Activated CD4-positive, alpha-beta T cell treated with anti-CD3 and anti-CD28 coated beads for 36 hours (primary cell): ENCODE measurements at regions of chr11 and their contacts with region 1.

Region 1: GRCh38 chr11:67353317-67354074 is at the start of gene POLD4:
- DNase-seq: peak; percentile 98
- ATAC-seq: peak; percentile 91
- H3K4me3 Mint-ChIP-seq: peak within 1 kb of the TSS; percentile 95
- H3K27ac Mint-ChIP-seq: peak within 1 kb of the TSS; percentile 99
- H3K4me1 Mint-ChIP-seq: peaks cover 49% of the 10 kb centered on the region
- H3K27me3 Mint-ChIP-seq: no peaks in the 10 kb centered on the region
- total RNA-seq, gene POLD4: 31.3 to 37.5 TPM

Region 2: GRCh38 chr11:67118801-67119584 is 234.5 kb before region 1 on chr11 and contains the start of gene KDM2A:
- CTCF ChIA-PET with region 1: no interaction called
- POLR2A ChIA-PET with region 1: no interaction called
- intact Hi-C with region 1: loop called in 1 of 2 experiments (anchors 1 kb)
- DNase-seq: peak; percentile 100
- ATAC-seq: peak; percentile 85
- H3K4me3 Mint-ChIP-seq: peak within 1 kb of the TSS; percentile 98
- H3K27ac Mint-ChIP-seq: peak within 1 kb of the TSS; percentile 83
- H3K4me1 Mint-ChIP-seq: peaks cover 28% of the 10 kb centered on the region
- H3K27me3 Mint-ChIP-seq: no peaks in the 10 kb centered on the region
- total RNA-seq, gene KDM2A: 74.8 to 89.7 TPM

Region 3: DNA sequence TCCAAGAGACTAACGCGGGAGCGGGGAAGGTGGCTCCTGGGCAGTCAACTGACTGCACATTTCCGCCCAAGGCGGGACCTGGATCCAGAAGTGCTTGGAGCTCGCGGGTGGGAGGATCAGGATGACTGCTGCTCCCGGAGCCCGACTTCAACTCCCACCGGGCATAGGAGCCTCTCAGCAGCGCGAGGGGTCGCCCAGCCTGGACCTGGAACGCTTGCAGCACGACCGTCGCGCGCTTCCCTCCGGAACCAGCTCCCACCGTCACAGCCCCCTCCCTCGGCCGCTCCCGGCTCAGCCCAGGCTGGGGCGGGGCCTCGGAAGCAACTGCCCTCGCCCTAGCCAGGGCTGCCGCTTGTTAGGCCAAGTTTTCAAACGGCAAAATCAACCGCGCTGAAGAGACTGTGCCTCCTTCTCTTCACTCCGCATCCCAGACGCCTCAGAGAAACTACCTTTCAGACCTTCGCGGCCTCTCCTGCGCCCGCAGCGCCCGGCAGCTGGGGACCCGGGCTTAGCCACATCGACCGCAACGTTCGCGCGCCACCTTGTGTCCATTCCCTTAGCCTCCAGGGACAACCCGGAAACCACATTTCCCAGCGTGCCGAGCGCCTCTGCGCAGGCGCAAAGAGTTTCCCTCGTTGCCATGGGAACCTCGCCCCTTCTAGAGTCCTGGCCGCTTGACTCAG is 36.1 kb before region 1 on chr11:
- CTCF ChIA-PET with region 1: interaction called, 39 read pairs
- POLR2A ChIA-PET with region 1: no interaction called
- intact Hi-C with region 1: loop called in 1 of 2 experiments (anchors 2 kb)
- DNase-seq: peak; percentile 99
- ATAC-seq: peak; percentile 83
- H3K4me3 Mint-ChIP-seq: peak overlapping the region; percentile 84
- H3K27ac Mint-ChIP-seq: peak overlapping the region; percentile 95
- H3K4me1 Mint-ChIP-seq: peaks cover 28% of the 10 kb centered on the region
- H3K27me3 Mint-ChIP-seq: peaks cover 3% of the 10 kb centered on the region

Region 4: DNA sequence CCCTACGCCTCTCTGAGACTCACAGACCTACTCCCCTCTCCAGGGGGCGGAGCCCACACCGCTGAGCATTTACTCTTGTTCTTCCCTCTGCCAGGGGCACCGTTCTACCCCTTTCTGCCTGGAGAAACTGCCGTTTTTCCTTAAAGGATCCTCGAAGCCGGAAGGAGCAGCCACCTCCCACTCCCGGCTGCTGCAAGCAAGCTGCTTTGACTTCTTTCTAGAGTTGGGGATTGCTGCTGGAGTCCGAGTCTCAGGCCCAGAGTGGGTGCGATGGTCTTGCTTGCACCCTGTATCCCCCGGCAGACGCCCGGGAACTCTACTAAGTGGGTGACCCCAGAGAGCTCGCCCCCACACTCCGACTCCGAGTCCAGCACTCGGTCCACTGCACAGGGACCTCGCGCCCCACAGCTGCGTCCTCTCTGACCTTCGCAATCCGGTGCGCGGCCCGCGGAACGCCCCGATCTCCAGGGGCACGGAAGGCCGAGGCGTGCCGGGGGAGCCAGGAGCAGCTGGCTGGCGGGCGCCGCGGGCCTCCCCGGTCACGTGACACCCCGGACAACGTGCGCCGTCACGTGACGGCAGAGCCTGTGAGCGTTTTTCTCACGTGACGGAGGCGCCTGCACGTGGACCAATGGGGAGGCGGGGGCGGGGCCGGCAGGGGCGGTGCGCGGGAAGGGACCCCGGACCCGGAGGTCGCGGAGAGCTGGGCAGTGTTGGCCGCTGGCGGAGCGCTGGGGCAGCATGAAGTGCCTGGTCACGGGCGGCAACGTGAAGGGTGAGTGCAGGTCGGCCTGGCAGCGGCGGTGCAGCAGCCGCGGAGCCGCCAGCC is 38.0 kb after region 1 on chr11 and contains the start of gene RAD9A:
- CTCF ChIA-PET with region 1: interaction called, 445 read pairs
- POLR2A ChIA-PET with region 1: interaction called, 3 read pairs
- intact Hi-C with region 1: loop called in 1 of 2 experiments (anchors 1 kb)
- DNase-seq: peak; percentile 97
- ATAC-seq: peak; percentile 74
- H3K4me3 Mint-ChIP-seq: peak within 1 kb of the TSS; percentile 89
- H3K27ac Mint-ChIP-seq: peak within 1 kb of the TSS; percentile 80
- H3K4me1 Mint-ChIP-seq: peaks cover 34% of the 10 kb centered on the region
- H3K27me3 Mint-ChIP-seq: no peaks in the 10 kb centered on the region
- total RNA-seq, gene RAD9A: 28.8 to 30.0 TPM

Region 5: DNA sequence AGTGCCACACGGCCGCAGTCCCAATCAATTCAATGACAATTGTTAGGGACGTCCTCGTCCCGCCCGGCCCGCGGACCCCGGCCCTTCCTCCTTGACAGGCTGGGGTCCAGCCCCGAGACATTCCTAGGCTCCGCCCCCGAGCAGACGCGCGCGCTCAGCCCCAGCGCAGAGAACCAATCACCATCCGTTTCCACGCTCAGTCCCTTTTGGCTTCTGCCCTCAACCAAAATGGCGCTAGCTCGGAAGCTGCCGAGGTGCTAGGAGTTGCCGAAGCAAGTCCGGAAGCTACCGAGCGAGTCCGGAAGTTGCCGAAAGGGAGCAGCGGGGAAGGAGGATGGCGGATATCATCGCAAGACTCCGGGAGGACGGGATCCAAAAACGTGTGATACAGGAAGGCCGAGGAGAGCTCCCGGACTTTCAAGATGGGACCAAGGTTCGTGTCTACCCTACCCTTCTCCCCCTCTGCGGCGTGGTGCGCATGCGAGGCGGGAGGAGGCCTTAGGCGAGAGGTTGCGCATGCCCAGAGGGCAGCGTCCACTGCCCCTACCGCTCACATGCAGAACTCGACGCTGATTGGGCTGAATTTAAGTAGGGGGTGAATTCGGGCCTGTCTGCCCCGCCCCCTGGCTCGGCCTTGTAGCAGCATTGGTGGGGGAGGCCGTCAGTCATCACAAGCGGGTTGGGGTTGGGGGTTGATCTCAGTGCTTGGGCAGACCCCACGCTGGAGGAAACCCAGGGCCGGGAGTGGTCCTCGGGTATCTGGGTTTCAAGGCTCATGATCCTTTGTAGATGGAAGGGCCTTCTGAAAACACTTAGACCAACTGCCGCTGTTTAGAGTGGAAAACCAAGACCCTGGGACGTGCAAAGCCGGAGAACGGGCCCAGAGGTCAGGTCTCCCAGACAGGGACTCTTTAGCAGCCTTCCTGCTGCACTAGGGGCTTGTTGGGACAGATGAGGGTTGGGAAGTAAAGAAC is 129.6 kb after region 1 on chr11 and contains the start of gene AIP:
- CTCF ChIA-PET with region 1: interaction called, 5 read pairs
- POLR2A ChIA-PET with region 1: no interaction called
- intact Hi-C with region 1: loop called in 1 of 2 experiments (anchors 1 kb)
- DNase-seq: peak; percentile 99
- ATAC-seq: peak; percentile 72
- H3K4me3 Mint-ChIP-seq: peak within 1 kb of the TSS; percentile 86
- H3K27ac Mint-ChIP-seq: peak within 1 kb of the TSS; percentile 99
- H3K4me1 Mint-ChIP-seq: peaks cover 50% of the 10 kb centered on the region
- H3K27me3 Mint-ChIP-seq: no peaks in the 10 kb centered on the region
- total RNA-seq, gene AIP: 142 to 144 TPM

Region 6: GRCh38 chr11:67630228-67630942 is 276.9 kb after region 1 on chr11:
- CTCF ChIA-PET with region 1: interaction called, 3 read pairs
- POLR2A ChIA-PET with region 1: no interaction called
- intact Hi-C with region 1: loop called (anchors 1 kb)
- DNase-seq: peak; percentile 99
- ATAC-seq: peak; percentile 79
- H3K4me3 Mint-ChIP-seq: peak overlapping the region; percentile 79
- H3K27ac Mint-ChIP-seq: peak overlapping the region; percentile 73
- H3K4me1 Mint-ChIP-seq: peaks cover 7% of the 10 kb centered on the region
- H3K27me3 Mint-ChIP-seq: no peaks in the 10 kb centered on the region